Vagina (tissue), 2 donors: ENCODE measurements at regions of chr3 and their contacts with region 1.

Region 1: DNA sequence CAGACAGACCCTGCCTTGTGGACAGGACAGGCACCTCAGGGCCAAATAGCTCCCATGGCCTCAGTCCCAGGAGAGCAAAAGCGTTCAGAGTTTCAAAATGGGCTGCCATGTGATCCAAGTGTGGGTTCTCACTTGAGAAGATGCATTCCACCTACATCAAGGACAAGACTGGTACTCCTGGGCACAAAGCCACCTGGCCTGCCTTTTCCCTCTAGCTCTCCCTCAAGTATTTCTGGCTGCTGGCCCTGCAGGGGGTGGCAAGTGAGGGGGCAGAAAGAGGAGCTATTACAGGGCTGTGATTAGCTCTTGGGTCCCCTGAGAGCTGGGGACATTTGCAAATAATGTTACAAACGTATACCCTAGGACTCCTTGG is 6.5 kb upstream of the COL7A1 start:
- DNase-seq: no peak
- H3K4me3 ChIP-seq: no peak overlapping the region
- H3K27ac ChIP-seq: no peak overlapping the region
- H3K4me1 ChIP-seq: peaks cover 56% of the 10 kb centered on the region
- H3K27me3 ChIP-seq: no peaks in the 10 kb centered on the region
- CTCF ChIP-seq: no peak
- POLR2A ChIP-seq: no peak

Region 2: DNA sequence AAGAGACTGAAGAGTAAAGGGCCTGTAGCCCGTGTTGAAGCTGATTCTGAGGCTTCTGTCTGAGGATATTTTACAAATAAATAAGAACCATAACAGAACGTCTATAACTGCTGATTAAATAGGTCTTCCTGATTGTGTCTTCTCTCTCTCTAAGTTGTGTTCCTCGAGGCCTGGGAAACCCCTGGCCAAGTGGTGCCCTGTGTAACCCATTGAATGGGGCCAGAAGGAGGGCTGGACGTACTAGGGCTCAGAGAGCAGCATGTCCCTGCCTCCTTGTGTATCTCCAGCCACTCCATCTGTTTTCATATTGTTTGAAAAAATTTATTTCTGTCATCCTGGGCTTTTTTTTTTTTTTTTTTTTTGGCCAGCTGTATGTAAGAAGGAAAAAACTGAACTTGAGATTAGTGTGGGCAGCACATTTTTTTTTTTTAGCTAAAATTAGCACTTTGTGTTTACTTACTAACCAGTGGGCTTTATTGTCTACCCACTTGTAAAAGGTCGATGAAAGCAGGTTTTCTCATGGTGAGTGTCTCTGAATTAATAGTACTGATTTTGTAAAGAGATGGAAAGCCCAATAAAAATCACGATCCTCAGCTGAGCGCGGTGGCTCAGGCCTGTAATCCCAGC is 787.9 kb before region 1 on chr3:
- intact Hi-C with region 1: no loop called
- DNase-seq: no peak
- H3K4me3 ChIP-seq: no peak overlapping the region
- H3K27ac ChIP-seq: no peak overlapping the region
- H3K4me1 ChIP-seq: no peaks in the 10 kb centered on the region
- H3K27me3 ChIP-seq: no peaks in the 10 kb centered on the region
- CTCF ChIP-seq: no peak
- POLR2A ChIP-seq: no peak

Region 3: GRCh38 chr3:48564017-48564416 is 37.6 kb before region 1 on chr3:
- intact Hi-C with region 1: loop called (anchors 2 kb)
- DNase-seq: no peak
- H3K4me3 ChIP-seq: no peak overlapping the region
- H3K27ac ChIP-seq: no peak overlapping the region
- H3K4me1 ChIP-seq: peaks cover 26% of the 10 kb centered on the region
- H3K27me3 ChIP-seq: no peaks in the 10 kb centered on the region
- CTCF ChIP-seq: no peak
- POLR2A ChIP-seq: no peak